WTC11 (cell line): ENCODE measurements at regions of chr2 and their contacts with region 1.

Region 1: DNA sequence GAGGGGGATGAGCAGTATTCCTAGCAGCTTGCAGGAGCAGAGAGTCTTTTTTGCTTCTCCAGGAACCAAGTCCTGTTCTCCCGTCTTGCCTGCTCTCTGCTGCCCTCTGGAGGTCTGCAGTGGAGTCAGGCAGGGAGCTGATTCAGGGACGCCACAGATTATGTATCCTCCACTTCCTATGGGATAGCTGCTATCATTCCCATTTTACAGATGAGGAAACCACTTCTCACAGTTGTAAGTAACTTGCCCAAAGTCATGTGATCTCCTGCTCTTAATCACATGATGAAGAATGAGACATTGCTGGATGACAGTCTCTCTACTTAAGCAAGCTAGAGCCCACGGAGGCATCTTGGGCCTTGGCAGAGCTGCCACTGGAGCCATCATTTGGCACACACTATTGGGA is 8.3 kb downstream of the SLC4A5 start:
- DNase-seq: peak; percentile 85
- ATAC-seq: peak; percentile 93
- H3K4me3 Mint-ChIP-seq: no peak overlapping the region
- H3K27ac Mint-ChIP-seq: no peak overlapping the region
- H3K4me1 Mint-ChIP-seq: no peaks in the 10 kb centered on the region
- H3K27me3 Mint-ChIP-seq: peaks cover 10% of the 10 kb centered on the region
- CTCF ChIP-seq: peak; percentile 90

Region 2: DNA sequence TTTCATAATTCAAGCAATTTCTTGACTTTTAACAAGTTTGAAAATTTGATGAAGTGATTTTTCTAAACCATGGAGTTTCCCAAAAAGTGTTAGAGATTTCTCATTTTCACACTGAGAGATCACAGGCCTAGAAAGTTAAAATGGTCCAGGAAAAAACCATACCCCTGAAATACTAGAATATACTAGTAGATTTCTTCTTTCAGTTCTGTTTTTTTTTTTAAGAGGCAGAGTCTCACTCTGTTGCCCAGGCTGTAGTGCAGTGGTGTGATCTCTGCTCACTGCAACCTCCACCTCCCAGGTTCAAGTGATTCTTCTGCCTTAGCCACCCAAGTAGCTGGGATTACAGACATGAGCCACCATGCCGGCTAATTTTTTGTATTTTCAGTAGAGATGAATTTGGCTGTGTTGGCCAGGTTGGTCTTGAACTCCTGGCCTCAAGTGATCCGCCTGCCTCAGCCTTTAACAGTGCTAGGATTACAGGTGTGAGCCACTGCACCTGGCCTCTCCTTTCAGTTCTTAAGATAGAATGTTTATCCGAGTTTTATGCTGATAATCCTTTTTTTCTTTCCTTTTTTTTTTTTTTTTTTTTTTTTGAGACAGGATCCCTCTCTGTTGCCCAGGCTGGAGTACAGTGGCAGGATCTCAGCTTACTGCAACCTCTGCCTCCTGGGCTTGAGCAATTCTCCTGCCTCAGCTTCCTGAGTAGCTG is 122.1 kb before region 1 on chr2:
- CTCF ChIA-PET with region 1: no interaction called
- POLR2A ChIA-PET with region 1: no interaction called
- DNase-seq: no peak
- ATAC-seq: no peak
- H3K4me3 Mint-ChIP-seq: no peak overlapping the region
- H3K27ac Mint-ChIP-seq: no peak overlapping the region
- H3K4me1 Mint-ChIP-seq: no peaks in the 10 kb centered on the region
- H3K27me3 Mint-ChIP-seq: no peaks in the 10 kb centered on the region
- CTCF ChIP-seq: no peak

Region 3: GRCh38 chr2:74261204-74261864 is 73.6 kb before region 1 on chr2:
- CTCF ChIA-PET with region 1: interaction called, 20 read pairs
- POLR2A ChIA-PET with region 1: no interaction called
- DNase-seq: peak; percentile 76
- ATAC-seq: peak; percentile 91
- H3K4me3 Mint-ChIP-seq: no peak overlapping the region
- H3K27ac Mint-ChIP-seq: no peak overlapping the region
- H3K4me1 Mint-ChIP-seq: peaks cover 19% of the 10 kb centered on the region
- H3K27me3 Mint-ChIP-seq: peaks cover 2% of the 10 kb centered on the region
- CTCF ChIP-seq: no peak

Region 4: DNA sequence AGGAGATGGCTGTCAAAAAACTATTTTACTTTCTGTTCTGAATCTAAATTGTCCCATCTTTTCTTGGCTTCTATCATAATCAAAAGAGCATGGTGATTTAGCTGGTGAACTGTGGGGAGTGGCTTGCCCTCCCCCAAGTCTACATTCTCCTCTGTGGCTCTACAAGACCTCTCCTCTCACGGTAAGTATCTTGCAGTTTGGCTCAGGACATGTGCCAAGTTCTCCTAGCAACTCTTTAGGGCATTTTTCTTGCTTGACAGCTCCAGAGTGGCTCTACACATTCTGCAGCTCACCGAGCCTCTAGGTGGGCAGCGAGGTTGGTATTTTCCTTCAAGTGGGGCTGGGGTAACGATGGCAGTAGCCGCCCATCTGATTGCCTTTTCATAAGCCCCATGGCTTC is 20.8 kb before region 1 on chr2:
- CTCF ChIA-PET with region 1: interaction called, 11 read pairs
- POLR2A ChIA-PET with region 1: no interaction called
- DNase-seq: no peak
- ATAC-seq: no peak
- H3K4me3 Mint-ChIP-seq: no peak overlapping the region
- H3K27ac Mint-ChIP-seq: no peak overlapping the region
- H3K4me1 Mint-ChIP-seq: peaks cover 8% of the 10 kb centered on the region
- H3K27me3 Mint-ChIP-seq: peaks cover 4% of the 10 kb centered on the region
- CTCF ChIP-seq: no peak

Region 5: DNA sequence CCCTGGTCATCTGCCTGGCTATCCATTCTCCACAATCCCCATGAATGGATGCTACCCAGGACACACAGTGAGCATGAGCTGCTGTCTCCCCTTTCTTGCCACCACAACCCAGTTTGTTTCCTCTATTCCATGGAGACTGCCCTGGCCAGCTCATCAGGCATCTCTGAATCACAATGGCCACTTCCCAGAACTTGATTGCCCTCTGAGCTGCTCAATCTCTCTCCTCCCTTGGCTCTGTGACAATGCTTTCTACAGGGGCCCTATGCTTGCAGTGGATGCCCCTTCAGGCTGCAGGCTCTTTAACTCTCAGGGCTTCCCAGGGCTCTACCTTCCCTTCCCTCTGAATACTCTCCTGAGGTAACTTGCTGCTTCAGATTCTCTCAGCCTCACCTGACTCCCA is 22.7 kb after region 1 on chr2:
- CTCF ChIA-PET with region 1: interaction called, 44 read pairs
- POLR2A ChIA-PET with region 1: no interaction called
- DNase-seq: no peak
- ATAC-seq: peak; percentile 89
- H3K4me3 Mint-ChIP-seq: no peak overlapping the region
- H3K27ac Mint-ChIP-seq: peak overlapping the region; percentile 61; the same call in 1 of the 2 replicates
- H3K4me1 Mint-ChIP-seq: peaks cover 16% of the 10 kb centered on the region
- H3K27me3 Mint-ChIP-seq: no peaks in the 10 kb centered on the region; the same call in 1 of the 2 replicates
- CTCF ChIP-seq: no peak

Region 6: GRCh38 chr2:74399785-74400184 is 64.9 kb after region 1 on chr2:
- CTCF ChIA-PET with region 1: interaction called, 15 read pairs
- POLR2A ChIA-PET with region 1: no interaction called
- DNase-seq: no peak
- ATAC-seq: peak; percentile 89
- H3K4me3 Mint-ChIP-seq: no peak overlapping the region
- H3K27ac Mint-ChIP-seq: no peak overlapping the region
- H3K4me1 Mint-ChIP-seq: peaks cover 6% of the 10 kb centered on the region
- H3K27me3 Mint-ChIP-seq: peaks cover 5% of the 10 kb centered on the region
- CTCF ChIP-seq: peak; percentile 50